ENCODE measurements at regions of chr18 and their contacts with region 1.

Region 1: DNA sequence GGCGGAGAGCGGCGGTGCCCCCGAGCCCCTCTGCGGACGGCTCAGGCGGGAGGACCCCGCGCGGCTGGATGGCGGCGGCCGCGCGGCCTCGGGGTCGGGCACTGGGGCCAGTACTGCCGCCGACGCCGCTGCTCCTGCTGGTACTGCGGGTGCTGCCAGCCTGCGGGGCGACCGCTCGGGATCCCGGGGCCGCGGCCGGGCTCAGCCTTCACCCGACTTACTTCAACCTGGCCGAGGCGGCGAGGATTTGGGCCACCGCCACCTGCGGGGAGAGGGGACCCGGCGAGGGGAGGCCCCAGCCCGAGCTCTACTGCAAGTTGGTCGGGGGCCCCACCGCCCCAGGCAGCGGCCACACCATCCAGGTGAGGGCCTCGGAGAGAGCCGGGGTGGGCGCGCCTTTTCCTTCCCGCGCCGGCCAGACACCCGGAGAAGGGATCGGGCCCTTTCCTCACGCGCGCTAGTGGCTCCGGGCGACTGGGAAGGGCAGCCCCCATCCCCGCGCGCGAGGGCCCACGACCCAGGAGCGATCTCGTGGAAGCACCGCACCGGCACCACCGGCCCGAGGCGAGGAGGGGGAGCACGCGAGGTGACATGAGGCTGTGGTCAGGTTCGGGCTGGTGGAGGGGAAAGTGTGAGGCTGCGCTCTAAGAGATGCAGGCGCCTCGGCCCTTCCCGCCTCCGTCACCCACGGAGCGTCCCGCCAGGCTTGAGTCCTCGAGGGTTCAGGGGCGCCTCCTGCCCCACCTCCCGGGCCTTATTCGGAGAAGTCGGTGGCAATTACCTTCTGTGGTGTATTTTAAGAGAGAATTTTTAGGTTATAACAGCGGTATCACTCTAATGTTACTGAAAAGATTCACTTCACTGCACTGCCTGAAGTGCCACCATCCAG is 607 bp downstream of the LAMA3 start:
- DNase-seq: peak in 1 of 10 donors; percentile 3
- H3K4me3 ChIP-seq: peak overlapping the region; percentile 31 to 72 (median 56)
- H3K27ac ChIP-seq: peak overlapping the region in 2 of 59 donors; percentile 6 to 65
- H3K27me3 ChIP-seq: peaks cover 0 to 53% (median 27%) of the 10 kb centered on the region in 45 donors
- CTCF ChIP-seq: peak in 1 of 56 donors; percentile 3

Region 2: DNA sequence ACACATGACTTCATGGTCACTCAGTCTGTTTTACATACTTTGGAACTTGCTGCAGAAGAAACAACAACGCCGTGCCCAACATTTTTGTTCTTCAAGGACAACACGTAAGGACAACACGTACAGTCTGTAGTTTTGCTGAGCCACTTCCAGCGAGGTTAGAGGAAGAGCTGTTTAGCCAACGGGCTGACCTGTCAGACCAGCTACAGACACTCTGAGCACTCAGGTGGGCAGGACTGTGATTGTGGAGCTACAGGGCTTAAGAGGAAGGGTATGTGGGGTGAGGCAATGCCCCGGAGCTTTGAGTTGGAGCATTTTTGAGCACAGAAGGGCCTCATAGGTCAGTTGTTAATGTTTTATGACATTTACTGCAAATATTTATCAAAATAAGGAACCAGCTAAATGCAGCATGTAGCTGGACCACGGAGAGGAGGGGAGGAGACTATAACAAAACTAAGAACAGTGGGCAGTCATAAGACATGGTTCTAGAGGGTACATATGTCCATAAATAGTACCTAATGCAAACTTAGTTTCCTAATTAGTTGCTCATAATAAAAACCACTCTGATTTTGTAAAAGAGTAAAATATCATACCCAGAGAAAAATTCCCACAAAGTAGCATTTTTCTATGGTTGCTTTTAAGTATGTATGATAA is 77.3 kb before region 1 on chr18:
- intact Hi-C with region 1: no loop called
- DNase-seq: no peak
- H3K4me3 ChIP-seq: no peak overlapping the region
- H3K27ac ChIP-seq: no peak overlapping the region
- H3K27me3 ChIP-seq: no peaks in the 10 kb centered on the region
- CTCF ChIP-seq: no peak

Region 3: DNA sequence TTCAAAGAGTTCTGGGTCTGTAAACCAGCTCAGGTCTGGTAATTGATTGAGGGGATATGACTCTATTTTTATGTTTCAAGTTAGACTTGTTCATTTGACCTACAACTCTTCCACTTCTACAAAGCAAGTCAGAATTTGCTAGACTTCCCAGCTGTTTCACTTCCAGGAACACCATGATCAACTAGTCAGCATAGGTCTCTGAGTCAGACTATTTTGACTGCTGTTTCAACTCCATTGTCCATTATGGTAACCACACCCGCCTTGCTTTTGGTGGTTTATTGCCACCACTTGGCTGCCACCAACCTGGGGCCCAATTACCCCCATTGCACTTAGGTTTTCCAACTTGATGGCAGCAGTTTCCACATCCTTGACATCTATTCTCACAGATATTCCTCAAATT is 116.0 kb after region 1 on chr18:
- intact Hi-C with region 1: loop called in 1 of 2 experiments (anchors 10 kb)
- DNase-seq: no peak
- H3K4me3 ChIP-seq: no peak overlapping the region
- H3K27ac ChIP-seq: no peak overlapping the region
- H3K27me3 ChIP-seq: no peaks in the 10 kb centered on the region
- CTCF ChIP-seq: no peak